GM12878 (cell line): ENCODE measurements at regions of chr1 and their contacts with region 1.

Region 1: DNA sequence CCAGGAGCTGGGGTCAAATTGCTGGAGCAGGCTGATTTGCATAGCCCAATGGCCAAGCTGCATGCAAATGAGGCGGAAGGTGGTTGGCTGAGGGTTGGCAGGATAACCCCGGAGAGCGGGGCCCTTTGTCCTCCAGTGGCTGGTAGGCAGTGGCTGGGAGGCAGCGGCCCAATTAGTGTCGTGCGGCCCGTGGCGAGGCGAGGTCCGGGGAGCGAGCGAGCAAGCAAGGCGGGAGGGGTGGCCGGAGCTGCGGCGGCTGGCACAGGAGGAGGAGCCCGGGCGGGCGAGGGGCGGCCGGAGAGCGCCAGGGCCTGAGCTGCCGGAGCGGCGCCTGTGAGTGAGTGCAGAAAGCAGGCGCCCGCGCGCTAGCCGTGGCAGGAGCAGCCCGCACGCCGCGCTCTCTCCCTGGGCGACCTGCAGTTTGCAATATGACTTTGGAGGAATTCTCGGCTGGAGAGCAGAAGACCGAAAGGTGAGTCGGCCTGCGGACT is at the start of gene GADD45A:
- DNase-seq: peak; percentile 97
- ATAC-seq: peak; percentile 88
- H3K4me3 ChIP-seq: peak within 1 kb of the TSS; percentile 81
- H3K27ac ChIP-seq: peak within 1 kb of the TSS; percentile 83
- H3K4me1 ChIP-seq: peaks cover 8% of the 10 kb centered on the region
- H3K27me3 ChIP-seq: peaks cover 0 to 2% of the 10 kb centered on the region in 2 experiments; a peak in 2 of 4 replicates
- CTCF ChIP-seq: no peak
- EP300 ChIP-seq: 0 out of 4 replicates have a peak, but pooled peaks of 1 of the 2 experiments have one; percentile 36
- POLR2A ChIP-seq: peak; percentile 100
- RAD21 ChIP-seq: no peak
- polyA plus RNA-seq, gene GADD45A: 4.7 to 9.3 TPM

Region 2: GRCh38 chr1:67339623-67340343 is 345.3 kb before region 1 on chr1:
- CTCF ChIA-PET with region 1: no interaction called
- POLR2A ChIA-PET with region 1: no interaction called
- RAD21 ChIA-PET with region 1: no interaction called
- SMC1A ChIA-PET with region 1: no interaction called
- in situ Hi-C with region 1: no loop called
- intact Hi-C with region 1: loop called (anchors 10 kb)
- DNase-seq: peak; percentile 84
- ATAC-seq: peak; percentile 35
- H3K4me3 ChIP-seq: peak overlapping the region; percentile 20; the same call in 1 of the 2 replicates
- H3K27ac ChIP-seq: peak overlapping the region; percentile 87
- H3K4me1 ChIP-seq: peaks cover 71% of the 10 kb centered on the region
- H3K27me3 ChIP-seq: no peaks in the 10 kb centered on the region
- CTCF ChIP-seq: no peak
- EP300 ChIP-seq: no peak
- POLR2A ChIP-seq: no peak
- RAD21 ChIP-seq: no peak

Region 3: DNA sequence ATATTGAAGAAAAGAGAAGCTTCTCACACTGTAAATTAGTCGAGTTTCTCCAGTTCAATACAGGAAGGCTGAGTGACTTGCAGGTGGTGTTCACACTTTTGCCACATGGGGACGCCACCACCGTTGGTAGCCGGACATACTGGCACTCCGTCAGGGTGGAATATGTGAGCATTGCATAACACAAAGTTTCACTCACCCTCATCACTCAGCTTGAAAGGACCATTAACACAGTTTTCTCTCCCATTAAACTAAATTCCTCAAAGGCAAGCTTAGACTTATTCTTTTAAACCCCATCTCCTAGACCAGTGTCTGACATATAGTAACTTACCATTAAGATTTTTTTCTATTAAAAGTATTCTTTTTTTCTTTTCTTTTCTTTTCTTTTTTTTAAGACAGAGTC is 149.6 kb before region 1 on chr1:
- CTCF ChIA-PET with region 1: interaction called, 12 read pairs
- POLR2A ChIA-PET with region 1: interaction called, 6 read pairs
- RAD21 ChIA-PET with region 1: interaction called, 5 read pairs
- SMC1A ChIA-PET with region 1: interaction called, 9 read pairs
- in situ Hi-C with region 1: no loop called
- intact Hi-C with region 1: loop called (anchors 5 kb)
- DNase-seq: peak; percentile 9
- ATAC-seq: peak; percentile 90
- H3K4me3 ChIP-seq: no peak overlapping the region
- H3K27ac ChIP-seq: no peak overlapping the region
- H3K4me1 ChIP-seq: no peaks in the 10 kb centered on the region
- H3K27me3 ChIP-seq: no peaks in the 10 kb centered on the region
- CTCF ChIP-seq: peak; percentile 66 to 77 (median 75)
- EP300 ChIP-seq: no peak
- POLR2A ChIP-seq: no peak
- RAD21 ChIP-seq: peak; percentile 65

Region 4: DNA sequence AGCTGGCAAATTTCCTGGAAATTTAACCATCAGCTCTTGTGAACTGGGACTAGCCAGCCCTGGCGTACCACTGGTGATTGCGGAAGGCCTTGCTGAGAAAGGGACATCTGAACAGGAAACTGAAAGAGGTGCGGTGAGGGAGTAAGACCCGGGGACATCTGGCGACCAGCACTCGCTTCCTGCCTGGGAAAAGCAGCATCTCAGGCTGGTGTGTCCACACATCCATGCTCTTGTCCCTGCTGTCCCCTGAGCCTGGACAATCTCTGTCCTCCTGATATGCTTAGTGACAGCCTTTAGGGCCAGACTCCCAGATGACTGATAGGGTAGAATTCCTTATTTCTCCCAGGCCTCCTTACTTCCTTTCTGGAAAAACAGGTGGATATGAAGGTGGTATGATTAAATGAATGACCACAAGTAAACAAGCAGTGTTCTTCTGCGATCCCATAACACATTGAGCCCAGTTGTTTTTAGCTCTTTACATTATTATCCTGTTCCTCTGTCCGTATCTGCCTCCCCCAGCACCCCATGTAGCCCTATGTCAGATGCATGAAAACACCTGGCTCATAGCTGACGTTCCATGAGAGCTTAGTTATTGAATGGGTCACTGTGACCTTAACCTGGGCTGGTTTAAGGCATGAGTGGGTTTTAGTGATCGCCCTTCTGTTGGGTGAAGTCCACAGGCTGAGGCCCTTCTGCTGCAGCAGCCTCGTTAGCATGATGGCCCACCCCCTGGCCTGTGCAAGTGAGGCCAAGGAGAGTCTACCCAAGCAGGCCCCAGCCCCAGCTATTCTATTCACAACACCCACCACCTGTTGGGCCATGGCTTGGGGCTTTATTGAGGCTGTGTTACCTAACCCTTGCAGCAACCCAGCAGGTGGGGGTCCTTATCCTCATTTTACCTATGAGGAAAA is 76.2 kb before region 1 on chr1:
- CTCF ChIA-PET with region 1: interaction called, 6 read pairs
- POLR2A ChIA-PET with region 1: interaction called, 9 read pairs
- RAD21 ChIA-PET with region 1: interaction called, 13 read pairs
- SMC1A ChIA-PET with region 1: interaction called, 19 read pairs
- in situ Hi-C with region 1: no loop called
- intact Hi-C with region 1: loop called (anchors 2 kb)
- DNase-seq: peak; percentile 5
- ATAC-seq: peak; percentile 45
- H3K4me3 ChIP-seq: no peak overlapping the region
- H3K27ac ChIP-seq: no peak overlapping the region
- H3K4me1 ChIP-seq: no peaks in the 10 kb centered on the region
- H3K27me3 ChIP-seq: no peaks in the 10 kb centered on the region
- CTCF ChIP-seq: no peak
- EP300 ChIP-seq: no peak
- POLR2A ChIP-seq: no peak
- RAD21 ChIP-seq: no peak

Region 5: DNA sequence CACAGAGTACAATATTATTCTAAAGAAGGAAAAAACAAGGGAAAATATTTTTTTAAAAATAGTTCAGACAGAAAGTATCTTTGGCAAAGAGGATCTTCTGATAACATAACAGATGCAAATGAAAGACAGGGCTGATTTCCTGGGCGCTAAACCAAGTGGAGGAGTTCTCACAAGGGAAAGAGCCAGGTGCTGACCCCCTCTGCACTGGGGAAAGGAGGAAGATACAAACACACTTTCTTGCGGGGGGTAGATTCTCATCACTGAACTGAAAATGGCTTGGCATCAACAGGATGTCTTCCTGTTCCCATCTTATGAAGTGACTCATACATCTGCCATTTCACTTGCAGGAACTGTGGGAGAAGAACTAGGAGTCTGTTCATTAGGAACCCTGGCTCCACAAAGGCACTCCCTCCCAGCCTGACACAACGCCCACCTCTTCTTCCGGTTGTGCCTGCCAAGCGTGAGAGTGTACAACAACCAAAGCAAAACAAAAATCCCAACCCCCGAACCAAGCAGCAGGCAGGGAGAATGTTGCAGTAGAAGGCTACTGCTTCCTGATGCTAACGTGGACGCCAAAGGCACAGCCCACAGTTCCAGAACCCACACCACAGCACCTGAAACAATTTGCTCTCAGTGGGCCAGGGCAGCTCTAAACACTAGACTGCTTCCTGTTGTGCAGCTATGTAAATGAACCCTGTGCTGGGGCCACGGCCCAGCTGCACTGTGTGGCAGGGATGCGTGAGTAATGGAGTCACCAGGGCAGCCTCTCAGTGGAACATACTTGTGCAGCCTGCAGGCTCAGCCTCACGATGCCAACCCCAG is 50.9 kb after region 1 on chr1:
- CTCF ChIA-PET with region 1: interaction called, 4 read pairs
- POLR2A ChIA-PET with region 1: interaction called, 8 read pairs
- RAD21 ChIA-PET with region 1: interaction called, 6 read pairs
- SMC1A ChIA-PET with region 1: interaction called, 38 read pairs
- in situ Hi-C with region 1: no loop called
- intact Hi-C with region 1: loop called (anchors 5 kb)
- DNase-seq: peak; percentile 64
- ATAC-seq: peak; percentile 95
- H3K4me3 ChIP-seq: peak overlapping the region; percentile 42
- H3K27ac ChIP-seq: peak overlapping the region; percentile 79
- H3K4me1 ChIP-seq: peaks cover 35% of the 10 kb centered on the region
- H3K27me3 ChIP-seq: no peaks in the 10 kb centered on the region
- CTCF ChIP-seq: no peak
- EP300 ChIP-seq: peak in 1 of 2 experiments; percentile 35; a peak in 2 of 4 replicates
- POLR2A ChIP-seq: peak; percentile 76
- RAD21 ChIP-seq: no peak

Region 6: DNA sequence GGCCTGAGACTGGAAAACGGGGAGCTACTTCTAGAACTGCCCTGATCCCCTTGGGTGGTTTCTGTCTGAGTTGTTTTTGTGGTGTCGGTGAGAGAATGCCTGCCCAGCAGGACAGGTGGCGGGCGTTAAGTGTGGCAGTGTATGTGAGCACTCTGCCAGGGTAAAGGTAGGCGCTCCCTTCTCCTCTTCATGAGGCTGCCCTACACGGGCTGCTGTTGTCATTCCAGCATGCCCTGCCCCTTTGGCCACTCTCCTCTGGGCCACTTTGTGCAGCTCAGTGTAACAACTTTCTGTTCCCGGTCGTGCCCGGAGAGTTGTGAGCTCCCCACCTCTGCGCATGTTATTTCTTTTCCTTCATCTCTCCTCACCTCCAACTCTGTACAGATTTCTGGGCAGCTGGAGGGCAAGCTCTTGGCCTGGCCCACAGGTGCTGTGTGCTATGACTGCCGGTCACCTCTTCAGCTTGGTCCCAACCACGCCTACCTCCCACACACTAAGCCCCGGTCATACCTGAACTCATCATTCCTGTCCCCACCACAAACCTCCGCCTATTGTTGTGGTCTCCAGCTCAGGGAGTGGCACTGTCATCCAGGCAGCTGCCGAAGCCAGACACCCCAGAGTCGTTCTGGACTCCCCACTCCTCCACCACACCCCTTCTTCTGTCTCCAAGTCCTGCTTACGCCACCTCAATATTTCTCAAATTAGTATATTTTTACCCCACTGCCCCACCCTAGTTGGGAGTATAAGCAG is 68.8 kb after region 1 on chr1:
- CTCF ChIA-PET with region 1: interaction called, 107 read pairs
- POLR2A ChIA-PET with region 1: interaction called, 33 read pairs
- RAD21 ChIA-PET with region 1: interaction called, 225 read pairs
- SMC1A ChIA-PET with region 1: interaction called, 197 read pairs
- in situ Hi-C with region 1: loop called (anchors 5 kb)
- intact Hi-C with region 1: no loop called
- DNase-seq: no peak
- ATAC-seq: peak; percentile 72
- H3K4me3 ChIP-seq: no peak overlapping the region
- H3K27ac ChIP-seq: no peak overlapping the region
- H3K4me1 ChIP-seq: peaks cover 27% of the 10 kb centered on the region
- H3K27me3 ChIP-seq: no peaks in the 10 kb centered on the region
- CTCF ChIP-seq: no peak
- EP300 ChIP-seq: 0 out of 4 replicates have a peak, but pooled peaks of 1 of the 2 experiments have one; percentile 36
- POLR2A ChIP-seq: no peak
- RAD21 ChIP-seq: no peak

Region 7: DNA sequence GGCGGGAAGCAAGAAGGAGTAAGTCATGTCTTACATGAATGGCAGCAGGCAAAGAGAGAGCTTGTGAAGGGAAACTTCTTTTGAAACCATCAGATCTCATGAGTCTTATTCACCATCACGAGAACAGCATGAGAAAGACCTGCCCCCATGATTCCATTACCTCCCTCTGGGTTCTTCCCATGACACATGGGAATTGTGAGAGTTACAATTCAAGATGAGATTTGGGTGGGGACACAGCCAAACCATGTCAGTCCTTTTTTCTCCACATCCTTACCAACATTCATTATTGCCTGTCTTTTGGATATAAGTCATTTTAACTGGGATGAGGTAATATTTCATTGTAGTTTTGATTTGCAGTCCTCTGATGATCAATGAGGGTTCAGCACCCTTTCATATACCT is 284.3 kb after region 1 on chr1:
- CTCF ChIA-PET with region 1: no interaction called
- POLR2A ChIA-PET with region 1: no interaction called
- RAD21 ChIA-PET with region 1: no interaction called
- SMC1A ChIA-PET with region 1: no interaction called
- in situ Hi-C with region 1: no loop called
- intact Hi-C with region 1: no loop called
- DNase-seq: no peak
- ATAC-seq: no peak
- H3K4me3 ChIP-seq: no peak overlapping the region
- H3K27ac ChIP-seq: no peak overlapping the region
- H3K4me1 ChIP-seq: no peaks in the 10 kb centered on the region
- H3K27me3 ChIP-seq: no peaks in the 10 kb centered on the region
- CTCF ChIP-seq: no peak
- EP300 ChIP-seq: no peak
- POLR2A ChIP-seq: no peak
- RAD21 ChIP-seq: no peak